Transverse colon (tissue), 4 donors: ENCODE measurements at regions of chr16 and their contacts with region 1.

Region 1: GRCh38 chr16:11407047-11407982 is 62.1 kb downstream of the RMI2 start:
- DNase-seq: peak; percentile 75
- H3K4me3 ChIP-seq: no peak overlapping the region
- H3K27ac ChIP-seq: no peak overlapping the region
- H3K4me1 ChIP-seq: no peaks in the 10 kb centered on the region
- H3K27me3 ChIP-seq: no peaks in the 10 kb centered on the region
- CTCF ChIP-seq: peak; percentile 66 to 83 (median 75)
- EP300 ChIP-seq: no peak
- POLR2A ChIP-seq: no peak

Region 2: DNA sequence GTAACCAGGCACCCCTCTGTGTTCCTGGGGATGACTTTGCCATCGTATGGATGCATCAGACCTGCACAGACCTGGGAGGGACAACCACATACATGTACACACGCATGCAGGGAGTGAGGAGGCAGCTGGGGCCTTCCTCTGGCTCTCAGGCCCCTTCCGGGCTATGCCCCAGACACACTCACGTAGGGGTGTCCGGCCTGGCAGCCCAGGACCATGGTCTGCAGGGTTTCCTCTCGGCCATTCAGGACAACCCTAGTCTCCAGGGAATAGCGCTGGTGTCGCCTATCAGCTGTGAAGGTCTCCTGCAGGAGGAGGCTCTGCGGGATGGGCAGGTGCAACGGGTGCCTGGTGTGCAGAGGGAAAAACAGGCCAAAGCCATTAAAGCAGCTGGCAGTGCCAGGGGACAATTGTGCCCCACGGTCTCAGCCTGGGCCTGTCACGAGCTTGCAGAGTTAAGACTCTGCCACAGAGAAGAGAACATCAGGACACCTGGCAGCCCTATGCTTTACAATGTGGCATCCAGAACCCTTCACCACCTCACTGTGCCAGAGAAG is 39.3 kb after region 1 on chr16:
- in situ Hi-C with region 1: no loop called
- intact Hi-C with region 1: no loop called
- DNase-seq: no peak
- H3K4me3 ChIP-seq: no peak overlapping the region
- H3K27ac ChIP-seq: no peak overlapping the region
- H3K4me1 ChIP-seq: no peaks in the 10 kb centered on the region
- H3K27me3 ChIP-seq: no peaks in the 10 kb centered on the region
- CTCF ChIP-seq: no peak
- EP300 ChIP-seq: no peak
- POLR2A ChIP-seq: no peak

Region 3: DNA sequence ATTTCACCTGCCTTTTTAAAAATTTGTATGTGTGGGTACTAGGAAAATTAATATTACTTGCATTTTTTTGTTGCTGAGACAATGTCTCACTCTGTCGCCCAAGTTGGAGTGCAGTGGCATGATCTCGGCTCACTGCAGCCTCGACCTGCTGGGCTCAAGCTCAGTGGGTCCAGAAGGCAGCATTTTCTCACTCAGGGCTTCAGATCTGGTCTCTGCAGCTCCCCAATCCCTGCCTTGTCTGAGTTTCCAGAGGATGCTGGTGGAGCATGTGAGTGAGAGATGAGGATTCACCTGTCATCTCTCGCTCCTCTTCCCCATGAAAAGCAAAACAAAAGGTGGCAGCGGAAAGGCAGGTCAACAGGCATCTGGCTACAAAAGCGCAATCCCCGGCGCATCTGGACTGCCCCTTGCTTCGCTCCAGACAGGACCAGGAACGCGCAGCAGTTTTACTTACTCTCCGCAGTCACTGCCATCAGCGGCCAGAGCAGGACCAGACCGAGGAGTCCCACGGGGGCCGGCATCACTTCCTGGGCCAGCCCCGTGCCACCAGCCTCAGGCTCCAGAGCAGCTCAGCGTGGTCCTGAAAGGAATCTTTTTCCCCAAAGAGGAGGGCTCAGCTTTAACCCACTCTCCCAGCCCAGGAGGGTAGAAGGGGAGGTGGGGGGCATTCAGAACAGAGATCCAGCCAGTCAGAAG is 119.5 kb after region 1 on chr16:
- in situ Hi-C with region 1: loop called in 1 of 4 experiments (anchors 10 kb)
- intact Hi-C with region 1: no loop called
- DNase-seq: no peak
- H3K4me3 ChIP-seq: no peak overlapping the region
- H3K27ac ChIP-seq: no peak overlapping the region
- H3K4me1 ChIP-seq: no peaks in the 10 kb centered on the region
- H3K27me3 ChIP-seq: peaks cover 6% of the 10 kb centered on the region
- CTCF ChIP-seq: no peak
- EP300 ChIP-seq: no peak
- POLR2A ChIP-seq: no peak

Region 4: DNA sequence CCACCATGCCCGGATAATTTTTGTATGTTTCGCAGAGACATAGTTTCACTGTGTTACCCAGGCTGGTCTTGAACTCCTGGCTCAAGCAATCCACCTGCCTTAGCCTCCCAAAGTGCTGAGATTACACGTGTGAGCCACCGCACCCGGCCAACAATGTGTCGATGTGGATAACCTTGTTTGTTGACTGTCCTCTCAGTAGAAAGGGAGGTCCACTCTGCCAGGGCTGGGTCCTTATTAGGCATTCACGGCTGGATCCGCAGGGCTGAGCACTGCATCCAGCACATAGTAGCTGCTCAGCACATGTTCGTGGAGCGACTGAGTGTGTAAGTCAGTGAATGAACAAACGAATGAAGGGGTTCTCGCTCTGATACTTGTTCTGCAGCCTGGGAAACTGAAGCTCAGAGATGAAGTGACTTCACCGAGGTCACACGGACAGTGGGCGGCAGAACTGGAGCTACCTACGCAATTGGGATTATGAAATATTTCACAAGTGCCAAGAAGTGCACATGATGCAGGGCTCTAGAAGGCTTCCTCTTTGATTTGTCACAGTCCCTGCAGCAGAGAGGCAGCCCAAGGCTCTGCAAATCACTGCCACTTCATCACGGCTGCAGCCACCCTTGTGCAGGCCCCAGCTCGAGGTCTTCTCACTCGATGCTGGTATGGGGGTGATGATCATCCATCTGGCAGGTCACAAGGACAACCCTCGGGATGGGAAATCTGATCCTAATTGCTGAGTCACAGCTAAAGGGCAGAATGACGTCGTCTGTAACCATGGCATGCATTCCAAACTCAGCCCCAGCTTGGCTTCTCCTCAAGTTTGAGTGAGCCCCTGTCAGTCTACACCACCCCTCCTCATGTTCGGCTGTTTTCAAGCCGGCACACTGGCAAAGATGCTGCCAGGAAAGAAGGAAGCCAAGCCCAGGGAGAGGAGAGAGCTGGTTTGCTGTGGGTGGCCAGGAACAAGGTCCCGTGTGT is 232.9 kb after region 1 on chr16:
- in situ Hi-C with region 1: loop called in 3 of 4 experiments (anchors 10 to 25 kb)
- intact Hi-C with region 1: no loop called
- DNase-seq: peak; percentile 62
- H3K4me3 ChIP-seq: no peak overlapping the region
- H3K27ac ChIP-seq: peak overlapping the region; percentile 71 to 83 (median 79)
- H3K4me1 ChIP-seq: peaks cover 5 to 30% (median 17%) of the 10 kb centered on the region in 4 donors
- H3K27me3 ChIP-seq: no peaks in the 10 kb centered on the region
- CTCF ChIP-seq: no peak
- EP300 ChIP-seq: no peak
- POLR2A ChIP-seq: peak; percentile 41

Region 5: DNA sequence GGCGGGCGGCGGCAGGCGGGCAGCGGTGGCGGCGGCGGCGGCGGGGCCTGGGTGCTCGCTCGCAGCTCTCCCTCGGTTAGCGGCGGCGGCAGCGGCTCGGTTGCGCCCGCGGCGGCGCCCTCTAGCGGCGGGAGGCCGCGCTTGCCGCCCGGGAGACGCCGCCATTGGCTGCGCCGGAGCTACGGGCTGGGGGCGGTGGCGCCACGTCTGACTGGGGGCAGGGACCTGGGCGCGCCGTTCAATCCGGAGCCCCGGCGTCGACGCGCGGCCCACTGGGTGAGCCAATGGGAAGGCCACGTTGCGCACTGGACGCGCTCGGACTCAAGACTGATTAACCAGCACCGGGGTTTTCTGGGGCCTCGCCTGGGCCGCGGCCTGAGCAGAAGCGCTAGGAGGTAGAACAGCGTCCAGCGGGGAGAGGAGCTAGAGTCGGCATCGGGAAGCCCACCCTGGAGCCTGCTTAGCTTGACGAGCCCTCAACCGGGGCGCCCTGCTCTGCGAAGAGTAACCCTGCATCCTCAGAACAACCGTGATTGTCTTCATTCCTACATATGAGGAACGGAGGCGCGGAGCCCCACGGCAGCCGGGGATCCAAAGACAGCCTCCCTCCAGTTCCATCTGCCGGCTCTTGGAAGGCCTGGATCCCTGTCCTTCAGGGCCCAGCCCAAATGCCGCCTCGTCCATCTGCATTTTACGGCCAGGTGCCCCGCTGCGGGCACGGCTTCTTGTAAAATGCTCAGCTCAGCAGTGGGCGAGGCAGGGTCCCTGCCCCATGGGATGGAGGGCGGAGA is 390.0 kb after region 1 on chr16 and contains the start of gene ZC3H7A:
- in situ Hi-C with region 1: loop called in 1 of 4 experiments (anchors 25 kb)
- intact Hi-C with region 1: no loop called
- DNase-seq: peak; percentile 97
- H3K4me3 ChIP-seq: peak within 1 kb of the TSS; percentile 79 to 95 (median 90)
- H3K27ac ChIP-seq: peak within 1 kb of the TSS; percentile 95 to 100 (median 97)
- H3K4me1 ChIP-seq: peaks cover 32 to 66% (median 49%) of the 10 kb centered on the region in 4 donors
- H3K27me3 ChIP-seq: no peaks in the 10 kb centered on the region
- CTCF ChIP-seq: peak; percentile 33 to 84 (median 66)
- EP300 ChIP-seq: no peak
- POLR2A ChIP-seq: peak; percentile 98
- total RNA-seq, gene ZC3H7A: 38.1 to 92.0 (median 63.3) TPM

Region 6: GRCh38 chr16:11819798-11820197 is 412.5 kb after region 1 on chr16:
- in situ Hi-C with region 1: loop called in 2 of 4 experiments (anchors 10 to 25 kb)
- intact Hi-C with region 1: no loop called
- DNase-seq: no peak
- H3K4me3 ChIP-seq: no peak overlapping the region
- H3K27ac ChIP-seq: no peak overlapping the region
- H3K4me1 ChIP-seq: peaks cover 0 to 8% (median 0%) of the 10 kb centered on the region in 4 donors
- H3K27me3 ChIP-seq: no peaks in the 10 kb centered on the region
- CTCF ChIP-seq: no peak
- EP300 ChIP-seq: no peak
- POLR2A ChIP-seq: no peak

Region 7: GRCh38 chr16:12781777-12782176 is 1374.5 kb after region 1 on chr16:
- in situ Hi-C with region 1: no loop called
- intact Hi-C with region 1: no loop called
- DNase-seq: no peak
- H3K4me3 ChIP-seq: no peak overlapping the region
- H3K27ac ChIP-seq: no peak overlapping the region
- H3K4me1 ChIP-seq: no peaks in the 10 kb centered on the region
- H3K27me3 ChIP-seq: no peaks in the 10 kb centered on the region
- CTCF ChIP-seq: no peak
- EP300 ChIP-seq: no peak
- POLR2A ChIP-seq: no peak